MCF 10A (cell line): ENCODE measurements at regions of chr14 and their contacts with region 1.

Region 1: GRCh38 chr14:81990312-81990761 is 456.7 kb upstream of the SEL1L start:
- DNase-seq: peak; percentile 71
- H3K4me3 Mint-ChIP-seq: no peak overlapping the region
- H3K27ac Mint-ChIP-seq: no peak overlapping the region
- H3K4me1 Mint-ChIP-seq: peaks cover 5% of the 10 kb centered on the region
- H3K27me3 Mint-ChIP-seq: no peaks in the 10 kb centered on the region
- CTCF ChIP-seq: peak; percentile 80

Region 2: GRCh38 chr14:81625343-81625742 is 365.0 kb before region 1 on chr14:
- CTCF ChIA-PET with region 1: interaction called, 10 read pairs
- POLR2A ChIA-PET with region 1: no interaction called
- intact Hi-C with region 1: loop called (anchors 5 kb)
- DNase-seq: peak; percentile 40
- H3K4me3 Mint-ChIP-seq: no peak overlapping the region
- H3K27ac Mint-ChIP-seq: no peak overlapping the region
- H3K4me1 Mint-ChIP-seq: no peaks in the 10 kb centered on the region
- H3K27me3 Mint-ChIP-seq: peaks cover 21% of the 10 kb centered on the region
- CTCF ChIP-seq: peak; percentile 38

Region 3: DNA sequence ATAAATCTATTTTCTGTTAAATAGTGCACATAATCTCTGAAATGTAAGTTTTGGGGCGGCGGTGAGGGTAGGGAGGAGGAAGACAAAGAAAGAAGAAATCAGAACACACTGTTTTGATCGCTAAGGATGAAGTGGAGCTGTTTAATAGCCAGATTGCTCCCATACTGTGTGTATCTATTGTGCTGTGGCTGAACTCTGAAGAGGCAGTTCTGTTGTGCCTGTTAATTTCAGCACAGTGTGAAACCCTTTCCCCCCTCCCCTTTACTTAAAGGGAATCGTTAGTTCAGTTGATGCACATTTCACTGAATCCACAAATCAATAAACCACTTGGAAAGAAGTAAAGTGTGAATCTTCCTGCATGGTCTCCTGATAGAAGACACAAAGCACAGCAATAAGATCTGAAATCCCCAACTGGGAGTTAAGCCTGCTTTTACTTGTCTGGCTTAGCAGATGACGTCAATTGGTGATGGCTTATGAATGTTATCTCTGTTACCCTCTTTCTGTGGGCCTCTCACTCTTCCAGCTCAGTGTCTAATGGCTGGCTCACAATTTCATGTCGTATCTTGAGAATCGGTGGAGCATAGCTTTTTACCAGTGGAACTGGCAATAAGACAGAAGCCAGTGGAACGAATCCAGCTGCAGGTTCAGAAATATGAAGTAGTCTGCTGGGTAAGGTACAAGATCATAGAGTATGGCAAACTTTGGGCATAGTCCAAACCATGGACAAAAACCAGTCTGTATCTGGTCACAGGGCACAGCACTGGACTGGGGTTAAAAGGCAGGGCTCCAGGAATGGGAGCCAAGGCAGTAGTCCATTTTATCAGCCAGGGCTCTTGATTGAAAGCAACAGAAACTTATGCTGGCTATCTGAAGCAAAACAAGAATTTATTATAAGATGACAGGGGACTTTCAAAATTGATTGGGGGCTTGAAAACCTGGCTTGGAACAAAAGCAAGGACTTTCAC is 43.2 kb before region 1 on chr14:
- CTCF ChIA-PET with region 1: no interaction called
- POLR2A ChIA-PET with region 1: no interaction called
- intact Hi-C with region 1: no loop called
- DNase-seq: no peak
- H3K4me3 Mint-ChIP-seq: no peak overlapping the region
- H3K27ac Mint-ChIP-seq: no peak overlapping the region
- H3K4me1 Mint-ChIP-seq: no peaks in the 10 kb centered on the region
- H3K27me3 Mint-ChIP-seq: no peaks in the 10 kb centered on the region
- CTCF ChIP-seq: no peak

Region 4: GRCh38 chr14:82003426-82003825 is 13.1 kb after region 1 on chr14:
- CTCF ChIA-PET with region 1: interaction called, 10 read pairs
- POLR2A ChIA-PET with region 1: interaction called, 6 read pairs
- intact Hi-C with region 1: no loop called
- DNase-seq: peak; percentile 6
- H3K4me3 Mint-ChIP-seq: no peak overlapping the region
- H3K27ac Mint-ChIP-seq: no peak overlapping the region
- H3K4me1 Mint-ChIP-seq: peaks cover 13% of the 10 kb centered on the region
- H3K27me3 Mint-ChIP-seq: no peaks in the 10 kb centered on the region
- CTCF ChIP-seq: no peak

Region 5: DNA sequence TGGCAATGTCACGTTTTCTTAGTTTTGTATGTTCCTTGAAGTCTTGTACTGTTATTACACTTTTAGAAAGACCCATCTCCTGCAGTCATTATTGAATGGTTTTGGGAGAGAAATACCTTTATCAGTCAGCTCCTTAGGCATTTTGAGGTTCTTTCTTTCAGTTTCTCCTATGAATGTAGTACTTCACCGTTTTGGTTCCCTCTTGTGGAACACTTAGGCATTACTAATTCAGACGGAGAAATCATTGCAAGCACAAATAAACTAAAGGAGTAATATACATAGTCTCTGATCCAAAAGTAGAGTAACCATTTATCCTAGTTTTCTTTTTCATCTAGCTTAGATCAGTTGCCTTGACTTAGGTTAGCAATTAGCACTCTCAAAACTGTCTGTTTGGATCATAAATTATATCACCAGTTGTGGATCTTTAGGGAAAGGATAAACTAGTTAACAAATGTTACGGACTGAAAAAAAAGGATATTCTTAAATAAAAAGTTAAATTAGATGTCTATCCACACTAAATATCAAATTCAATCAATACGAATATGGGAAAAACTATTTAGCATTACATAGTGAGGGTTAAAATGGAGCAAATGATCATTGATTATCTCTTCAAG is 1081.7 kb after region 1 on chr14:
- CTCF ChIA-PET with region 1: interaction called, 6 read pairs
- POLR2A ChIA-PET with region 1: no interaction called
- intact Hi-C with region 1: loop called (anchors 1 kb)
- DNase-seq: peak; percentile 54
- H3K4me3 Mint-ChIP-seq: no peak overlapping the region
- H3K27ac Mint-ChIP-seq: no peak overlapping the region
- H3K4me1 Mint-ChIP-seq: no peaks in the 10 kb centered on the region
- H3K27me3 Mint-ChIP-seq: no peaks in the 10 kb centered on the region
- CTCF ChIP-seq: no peak

Region 6: DNA sequence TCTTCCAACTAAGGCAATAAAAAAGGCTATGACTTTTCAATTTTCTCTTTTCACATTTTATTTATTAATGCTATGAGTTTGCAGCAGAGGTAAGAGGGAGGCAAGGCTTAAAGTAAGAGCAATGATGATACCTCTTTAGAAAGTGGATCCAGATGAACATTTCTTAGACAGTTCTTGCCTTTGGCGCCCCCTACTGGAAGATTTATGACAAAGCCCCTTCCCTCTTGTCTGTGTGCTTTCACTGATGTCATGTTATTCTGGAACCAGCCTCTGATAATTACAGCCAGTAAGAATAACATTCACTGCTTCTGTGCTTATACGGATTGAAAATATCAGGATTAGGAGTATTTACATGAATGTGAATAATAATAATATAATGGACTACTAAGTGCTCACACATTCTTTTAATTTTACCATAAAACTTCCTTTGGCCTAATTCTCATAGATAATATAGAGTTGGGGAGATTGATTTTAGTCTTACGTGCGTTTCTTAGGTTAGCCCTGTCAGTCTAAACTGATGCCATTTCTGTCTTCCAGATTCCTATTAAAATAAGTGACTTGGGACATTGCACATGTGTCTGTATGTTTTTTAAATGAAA is 1473.3 kb after region 1 on chr14:
- CTCF ChIA-PET with region 1: interaction called, 3 read pairs
- POLR2A ChIA-PET with region 1: no interaction called
- intact Hi-C with region 1: loop called (anchors 2 kb)
- DNase-seq: peak; percentile 82
- H3K4me3 Mint-ChIP-seq: no peak overlapping the region
- H3K27ac Mint-ChIP-seq: peak overlapping the region; percentile 65
- H3K4me1 Mint-ChIP-seq: no peaks in the 10 kb centered on the region
- H3K27me3 Mint-ChIP-seq: no peaks in the 10 kb centered on the region
- CTCF ChIP-seq: peak; percentile 81